ENCODE measurements at regions of chr11 and their contacts with region 1.

Region 1: GRCh38 chr11:128422576-128423370 is 164.6 kb downstream of the ETS1 start:
- DNase-seq: peak; percentile 70 to 95 (median 87)
- ATAC-seq: peak; percentile 95
- H3K4me3 ChIP-seq: peak overlapping the region in 1 of 2 experiments; percentile 0
- H3K4me3 Mint-ChIP-seq: peak overlapping the region; percentile 53
- H3K27ac ChIP-seq: peak overlapping the region; percentile 18 to 41
- H3K27ac Mint-ChIP-seq: peak overlapping the region; percentile 97
- H3K4me1 ChIP-seq: peaks cover 41% of the 10 kb centered on the region
- H3K4me1 Mint-ChIP-seq: peaks cover 51% of the 10 kb centered on the region
- H3K27me3 ChIP-seq: no peaks in the 10 kb centered on the region
- H3K27me3 Mint-ChIP-seq: no peaks in the 10 kb centered on the region
- CTCF ChIP-seq: no peak

Region 2: GRCh38 chr11:126585781-126586491 is 1836.8 kb before region 1 on chr11:
- CTCF ChIA-PET with region 1: no interaction called
- POLR2A ChIA-PET with region 1: no interaction called
- intact Hi-C with region 1: no loop called
- DNase-seq: no peak
- ATAC-seq: no peak
- H3K4me3 ChIP-seq: no peak overlapping the region
- H3K4me3 Mint-ChIP-seq: no peak overlapping the region
- H3K27ac ChIP-seq: no peak overlapping the region
- H3K27ac Mint-ChIP-seq: no peak overlapping the region
- H3K4me1 ChIP-seq: no peaks in the 10 kb centered on the region
- H3K4me1 Mint-ChIP-seq: no peaks in the 10 kb centered on the region
- H3K27me3 ChIP-seq: peaks cover 0 to 3% of the 10 kb centered on the region in 2 experiments
- H3K27me3 Mint-ChIP-seq: peaks cover 3% of the 10 kb centered on the region
- CTCF ChIP-seq: no peak

Region 3: GRCh38 chr11:128379587-128380580 is 42.9 kb before region 1 on chr11:
- CTCF ChIA-PET with region 1: no interaction called
- POLR2A ChIA-PET with region 1: no interaction called
- intact Hi-C with region 1: loop called in 1 of 2 experiments (anchors 5 kb)
- DNase-seq: peak in 6 of 9 experiments; percentile 8 to 56 (median 32)
- ATAC-seq: peak; percentile 85
- H3K4me3 ChIP-seq: no peak overlapping the region
- H3K4me3 Mint-ChIP-seq: no peak overlapping the region
- H3K27ac ChIP-seq: no peak overlapping the region
- H3K27ac Mint-ChIP-seq: peak overlapping the region; percentile 60
- H3K4me1 ChIP-seq: peaks cover 16% of the 10 kb centered on the region
- H3K4me1 Mint-ChIP-seq: peaks cover 31% of the 10 kb centered on the region
- H3K27me3 ChIP-seq: no peaks in the 10 kb centered on the region
- H3K27me3 Mint-ChIP-seq: no peaks in the 10 kb centered on the region
- CTCF ChIP-seq: no peak

Region 4: DNA sequence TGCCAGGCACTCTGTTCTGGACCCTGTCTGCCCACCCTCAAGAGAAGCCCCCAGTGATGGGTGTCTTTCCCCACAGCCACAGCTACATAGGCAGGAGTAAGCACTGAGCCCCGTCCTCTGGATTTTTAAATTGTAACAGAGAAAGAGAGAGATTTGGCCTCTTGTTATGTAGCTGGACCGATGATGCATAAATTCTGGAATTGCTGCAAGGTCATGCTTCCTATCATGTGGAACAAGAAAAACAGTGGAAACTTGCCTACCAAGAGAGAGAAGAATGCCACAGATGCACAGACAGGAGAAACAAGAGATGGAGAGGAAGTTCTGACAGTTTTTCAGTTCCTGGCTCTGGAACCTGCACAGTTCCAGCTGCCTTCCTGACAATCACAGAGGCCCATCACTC is 14.4 kb after region 1 on chr11:
- CTCF ChIA-PET with region 1: interaction called, 10 read pairs
- POLR2A ChIA-PET with region 1: interaction called, 6 read pairs
- intact Hi-C with region 1: no loop called
- DNase-seq: no peak
- ATAC-seq: no peak
- H3K4me3 ChIP-seq: no peak overlapping the region
- H3K4me3 Mint-ChIP-seq: no peak overlapping the region
- H3K27ac ChIP-seq: no peak overlapping the region
- H3K27ac Mint-ChIP-seq: no peak overlapping the region
- H3K4me1 ChIP-seq: no peaks in the 10 kb centered on the region
- H3K4me1 Mint-ChIP-seq: peaks cover 12% of the 10 kb centered on the region
- H3K27me3 ChIP-seq: no peaks in the 10 kb centered on the region
- H3K27me3 Mint-ChIP-seq: no peaks in the 10 kb centered on the region
- CTCF ChIP-seq: no peak

Region 5: GRCh38 chr11:128463371-128463829 is 40.6 kb after region 1 on chr11:
- CTCF ChIA-PET with region 1: interaction called, 3 read pairs
- POLR2A ChIA-PET with region 1: interaction called, 3 read pairs
- intact Hi-C with region 1: loop called in 1 of 2 experiments (anchors 2 kb)
- DNase-seq: peak in 1 of 9 experiments; percentile 19
- ATAC-seq: no peak
- H3K4me3 ChIP-seq: no peak overlapping the region
- H3K4me3 Mint-ChIP-seq: peak overlapping the region; percentile 70
- H3K27ac ChIP-seq: peak overlapping the region; percentile 68 to 88
- H3K27ac Mint-ChIP-seq: peak overlapping the region; percentile 94
- H3K4me1 ChIP-seq: peaks cover 89% of the 10 kb centered on the region
- H3K4me1 Mint-ChIP-seq: peaks cover 97% of the 10 kb centered on the region
- H3K27me3 ChIP-seq: no peaks in the 10 kb centered on the region
- H3K27me3 Mint-ChIP-seq: no peaks in the 10 kb centered on the region
- CTCF ChIP-seq: no peak

Region 6: GRCh38 chr11:128535468-128536457 is 113.0 kb after region 1 on chr11:
- CTCF ChIA-PET with region 1: no interaction called
- POLR2A ChIA-PET with region 1: no interaction called
- intact Hi-C with region 1: no loop called
- DNase-seq: no peak
- ATAC-seq: no peak
- H3K4me3 ChIP-seq: no peak overlapping the region
- H3K4me3 Mint-ChIP-seq: no peak overlapping the region
- H3K27ac ChIP-seq: no peak overlapping the region
- H3K27ac Mint-ChIP-seq: no peak overlapping the region
- H3K4me1 ChIP-seq: no peaks in the 10 kb centered on the region
- H3K4me1 Mint-ChIP-seq: peaks cover 21% of the 10 kb centered on the region
- H3K27me3 ChIP-seq: no peaks in the 10 kb centered on the region
- H3K27me3 Mint-ChIP-seq: no peaks in the 10 kb centered on the region
- CTCF ChIP-seq: no peak